Activated CD4-positive, alpha-beta memory T cell treated with anti-CD3 and anti-CD28 coated beads for 36 hours (primary cell): ENCODE measurements at regions of chr2 and their contacts with region 1.

Region 1: GRCh38 chr2:191114403-191114886 is 36.3 kb downstream of the STAT4 start:
- DNase-seq: peak; percentile 57
- H3K4me3 Mint-ChIP-seq: peak overlapping the region; percentile 66
- H3K27ac Mint-ChIP-seq: peak overlapping the region; percentile 88
- H3K4me1 Mint-ChIP-seq: peaks cover 70% of the 10 kb centered on the region
- H3K27me3 Mint-ChIP-seq: no peaks in the 10 kb centered on the region

Region 2: DNA sequence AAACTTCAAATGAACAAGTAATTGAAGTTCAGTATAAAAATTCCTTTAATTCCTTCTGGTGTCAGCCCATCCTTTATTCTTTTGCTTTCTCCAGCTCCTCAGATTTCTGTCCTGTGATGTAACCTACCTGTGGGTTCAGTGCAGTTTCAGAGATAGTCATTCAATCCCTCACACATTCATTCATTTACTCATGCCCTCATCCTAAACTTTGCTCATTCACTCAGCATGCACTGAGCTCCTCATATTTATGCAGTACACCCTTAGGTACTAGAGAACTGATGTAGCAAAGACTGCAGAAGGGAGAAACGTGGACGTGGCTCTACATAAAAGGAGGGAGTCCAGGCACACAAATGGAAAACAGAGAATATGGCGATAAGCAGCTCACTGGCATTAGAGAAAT is 55.1 kb before region 1 on chr2:
- CTCF ChIA-PET with region 1: interaction called, 3 read pairs
- POLR2A ChIA-PET with region 1: interaction called, 3 read pairs
- intact Hi-C with region 1: loop called (anchors 1 kb)
- DNase-seq: no peak
- H3K4me3 Mint-ChIP-seq: no peak overlapping the region
- H3K27ac Mint-ChIP-seq: peak overlapping the region; percentile 10
- H3K4me1 Mint-ChIP-seq: peaks cover 68% of the 10 kb centered on the region
- H3K27me3 Mint-ChIP-seq: no peaks in the 10 kb centered on the region

Region 3: GRCh38 chr2:191128172-191128910 is 13.9 kb after region 1 on chr2:
- CTCF ChIA-PET with region 1: interaction called, 7 read pairs
- POLR2A ChIA-PET with region 1: interaction called, 15 read pairs
- intact Hi-C with region 1: loop called (anchors 1 kb)
- DNase-seq: no peak
- H3K4me3 Mint-ChIP-seq: peak overlapping the region; percentile 52
- H3K27ac Mint-ChIP-seq: peak overlapping the region; percentile 28
- H3K4me1 Mint-ChIP-seq: peaks cover 70% of the 10 kb centered on the region
- H3K27me3 Mint-ChIP-seq: no peaks in the 10 kb centered on the region

Region 4: GRCh38 chr2:191178806-191179514 is 64.5 kb after region 1 on chr2:
- CTCF ChIA-PET with region 1: no interaction called
- POLR2A ChIA-PET with region 1: no interaction called
- intact Hi-C with region 1: no loop called
- DNase-seq: no peak
- H3K4me3 Mint-ChIP-seq: no peak overlapping the region
- H3K27ac Mint-ChIP-seq: no peak overlapping the region
- H3K4me1 Mint-ChIP-seq: peaks cover 23% of the 10 kb centered on the region
- H3K27me3 Mint-ChIP-seq: no peaks in the 10 kb centered on the region

Region 5: DNA sequence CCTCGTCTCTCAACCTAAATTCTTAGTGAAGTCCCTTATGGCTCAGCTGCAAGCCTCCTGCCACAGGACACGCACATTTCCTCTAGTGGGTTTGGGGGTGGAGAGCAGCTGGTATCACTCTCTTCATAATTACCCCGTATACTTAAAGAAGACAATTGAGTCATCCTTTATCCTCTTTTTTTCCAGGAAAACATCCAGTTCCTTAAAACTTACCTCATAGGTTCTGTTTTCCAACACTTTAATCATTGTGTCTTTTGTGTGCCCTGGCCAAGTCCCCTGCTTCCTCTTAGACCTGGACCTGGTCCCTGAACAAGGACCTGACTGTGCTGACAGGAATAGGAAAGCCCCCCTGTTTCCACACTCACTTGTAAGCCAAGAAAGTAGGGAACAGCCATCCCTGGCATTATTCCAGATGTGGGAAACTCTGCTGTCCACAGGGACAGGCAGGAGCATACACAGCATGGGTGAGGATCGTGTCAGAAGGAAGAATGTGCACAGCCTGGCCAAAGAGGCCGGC is 88.5 kb after region 1 on chr2:
- CTCF ChIA-PET with region 1: no interaction called
- POLR2A ChIA-PET with region 1: no interaction called
- intact Hi-C with region 1: no loop called
- DNase-seq: peak; percentile 42
- H3K4me3 Mint-ChIP-seq: no peak overlapping the region
- H3K27ac Mint-ChIP-seq: peak overlapping the region; percentile 70
- H3K4me1 Mint-ChIP-seq: peaks cover 46% of the 10 kb centered on the region
- H3K27me3 Mint-ChIP-seq: no peaks in the 10 kb centered on the region